Transverse colon (tissue), 4 donors: ENCODE measurements at regions of chr4 and their contacts with region 1.

Region 1: GRCh38 chr4:53908661-53909078 is 155.7 kb downstream of the CHIC2 start:
- DNase-seq: peak; percentile 15
- H3K4me3 ChIP-seq: peak overlapping the region in 1 of 4 donors; percentile 5
- H3K27ac ChIP-seq: peak overlapping the region; percentile 19 to 62 (median 41)
- H3K4me1 ChIP-seq: peaks cover 0 to 27% (median 15%) of the 10 kb centered on the region in 4 donors
- H3K27me3 ChIP-seq: peaks cover 41% of the 10 kb centered on the region
- CTCF ChIP-seq: peak; percentile 44 to 74 (median 58)
- EP300 ChIP-seq: no peak
- POLR2A ChIP-seq: no peak

Region 2: DNA sequence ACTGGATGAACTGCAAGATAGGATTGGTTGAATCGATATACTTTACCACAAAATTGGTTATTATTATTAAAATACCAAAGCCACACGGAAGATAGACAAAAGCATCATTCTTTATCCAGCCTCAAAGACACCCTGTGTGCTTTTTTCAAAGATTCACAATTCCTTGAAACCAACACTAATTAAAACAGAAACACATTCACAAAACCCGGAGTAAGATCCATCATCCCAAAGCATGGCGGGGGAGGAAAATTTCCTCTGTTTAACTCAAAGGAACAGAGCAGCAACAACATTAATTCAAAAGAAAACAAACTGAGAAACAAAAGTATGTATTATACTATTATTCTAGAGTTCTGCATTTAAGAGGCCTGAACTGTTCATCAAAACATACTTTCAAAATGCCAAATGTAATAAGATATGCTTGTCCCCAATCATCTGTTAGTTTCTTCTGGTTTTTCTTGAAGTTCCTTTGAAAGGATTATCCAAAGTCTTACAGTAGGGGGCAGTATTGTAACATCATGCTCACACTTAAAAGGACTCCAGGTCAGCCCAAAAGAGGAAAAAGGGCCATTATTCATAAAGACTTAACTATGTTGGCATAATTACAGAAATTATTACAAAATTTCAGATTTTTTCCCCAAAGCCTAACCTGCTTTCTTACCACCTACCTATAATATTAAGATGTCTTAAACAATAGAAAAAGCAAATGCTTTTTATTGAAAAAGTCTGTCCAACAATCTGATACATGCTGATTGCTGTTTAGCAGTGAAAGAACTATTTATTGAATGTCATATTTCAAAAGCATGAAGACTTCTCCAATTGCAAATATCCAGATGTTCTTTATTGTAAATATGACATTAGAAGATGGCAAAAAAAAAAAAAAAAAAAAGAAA is 711.5 kb before region 1 on chr4:
- in situ Hi-C with region 1: loop called in 1 of 4 experiments (anchors 25 kb)
- intact Hi-C with region 1: no loop called
- DNase-seq: no peak
- H3K4me3 ChIP-seq: no peak overlapping the region
- H3K27ac ChIP-seq: no peak overlapping the region
- H3K4me1 ChIP-seq: no peaks in the 10 kb centered on the region
- H3K27me3 ChIP-seq: no peaks in the 10 kb centered on the region
- CTCF ChIP-seq: peak; percentile 67 to 78 (median 74)
- EP300 ChIP-seq: no peak
- POLR2A ChIP-seq: no peak

Region 3: DNA sequence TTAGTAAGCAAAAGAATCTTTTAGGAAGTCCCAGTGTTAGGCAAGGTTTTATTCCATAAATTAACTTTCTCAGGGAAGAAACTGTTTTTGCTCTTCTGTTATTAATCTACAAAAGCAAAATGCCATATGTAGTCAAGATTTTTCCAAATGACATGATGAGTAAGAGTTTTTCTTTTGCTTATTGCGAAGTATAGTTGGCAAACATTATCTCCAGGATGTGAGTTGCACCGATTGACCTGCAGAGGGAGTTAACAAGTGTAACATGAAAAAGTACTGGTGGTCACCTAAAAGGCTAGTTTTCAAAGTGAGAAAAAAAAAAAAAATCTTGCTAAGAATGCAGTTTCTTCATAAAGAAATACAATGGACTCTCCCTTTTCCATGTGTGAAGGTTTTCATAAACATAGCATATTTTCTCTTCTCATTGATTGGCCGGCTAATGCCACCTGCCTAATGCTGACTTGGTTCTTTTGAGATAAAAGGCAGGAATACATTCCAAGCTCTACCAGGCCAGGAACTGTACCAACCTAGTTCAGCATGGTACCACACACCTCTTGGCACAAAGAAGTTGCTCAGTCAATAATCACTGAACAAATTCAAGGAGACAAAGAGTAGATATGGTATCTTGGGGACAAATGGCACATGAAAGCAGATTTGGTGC is 417.6 kb before region 1 on chr4:
- in situ Hi-C with region 1: loop called in 1 of 4 experiments (anchors 25 kb)
- intact Hi-C with region 1: no loop called
- DNase-seq: peak; percentile 30
- H3K4me3 ChIP-seq: no peak overlapping the region
- H3K27ac ChIP-seq: peak overlapping the region; percentile 28 to 46 (median 38)
- H3K4me1 ChIP-seq: no peaks in the 10 kb centered on the region
- H3K27me3 ChIP-seq: no peaks in the 10 kb centered on the region
- CTCF ChIP-seq: peak; percentile 51 to 72 (median 60)
- EP300 ChIP-seq: no peak
- POLR2A ChIP-seq: no peak

Region 4: GRCh38 chr4:53702334-53703266 is 206.1 kb before region 1 on chr4:
- in situ Hi-C with region 1: loop called in 1 of 4 experiments (anchors 25 kb)
- intact Hi-C with region 1: no loop called
- DNase-seq: peak; percentile 82
- H3K4me3 ChIP-seq: peak overlapping the region in 2 of 4 donors; percentile 12 to 15
- H3K27ac ChIP-seq: peak overlapping the region; percentile 49 to 67 (median 54)
- H3K4me1 ChIP-seq: peaks cover 5 to 22% (median 14%) of the 10 kb centered on the region in 4 donors
- H3K27me3 ChIP-seq: no peaks in the 10 kb centered on the region
- CTCF ChIP-seq: no peak
- EP300 ChIP-seq: no peak
- POLR2A ChIP-seq: no peak